ENCODE measurements at regions of chr3 and their contacts with region 1.

Region 1: GRCh38 chr3:61858056-61858455 is 296.7 kb downstream of the PTPRG start:
- DNase-seq: no peak
- H3K4me3 Mint-ChIP-seq: no peak overlapping the region
- H3K27ac Mint-ChIP-seq: no peak overlapping the region
- H3K4me1 Mint-ChIP-seq: no peaks in the 10 kb centered on the region
- H3K27me3 Mint-ChIP-seq: no peaks in the 10 kb centered on the region

Region 2: DNA sequence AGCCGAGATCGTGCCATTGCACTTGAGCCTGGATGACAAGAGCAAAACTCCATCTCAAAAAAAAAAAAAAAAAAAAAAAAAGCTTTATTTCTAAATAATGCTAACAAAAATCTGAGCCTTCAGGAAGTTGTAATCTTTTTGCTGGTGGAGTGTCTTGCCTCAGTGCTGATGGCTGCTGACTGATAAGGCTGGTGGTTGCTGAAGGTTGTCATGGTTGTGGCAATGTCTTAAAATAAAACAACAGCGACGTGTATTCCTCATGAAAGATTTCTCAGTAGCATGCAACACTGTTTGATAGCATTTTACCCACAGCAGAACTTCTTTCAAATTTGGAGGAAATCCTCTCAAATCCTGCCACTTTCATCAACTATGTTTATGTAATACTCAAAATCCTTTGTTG is 374.1 kb before region 1 on chr3:
- CTCF ChIA-PET with region 1: no interaction called
- DNase-seq: no peak
- H3K4me3 Mint-ChIP-seq: no peak overlapping the region
- H3K27ac Mint-ChIP-seq: no peak overlapping the region
- H3K4me1 Mint-ChIP-seq: no peaks in the 10 kb centered on the region
- H3K27me3 Mint-ChIP-seq: no peaks in the 10 kb centered on the region

Region 3: DNA sequence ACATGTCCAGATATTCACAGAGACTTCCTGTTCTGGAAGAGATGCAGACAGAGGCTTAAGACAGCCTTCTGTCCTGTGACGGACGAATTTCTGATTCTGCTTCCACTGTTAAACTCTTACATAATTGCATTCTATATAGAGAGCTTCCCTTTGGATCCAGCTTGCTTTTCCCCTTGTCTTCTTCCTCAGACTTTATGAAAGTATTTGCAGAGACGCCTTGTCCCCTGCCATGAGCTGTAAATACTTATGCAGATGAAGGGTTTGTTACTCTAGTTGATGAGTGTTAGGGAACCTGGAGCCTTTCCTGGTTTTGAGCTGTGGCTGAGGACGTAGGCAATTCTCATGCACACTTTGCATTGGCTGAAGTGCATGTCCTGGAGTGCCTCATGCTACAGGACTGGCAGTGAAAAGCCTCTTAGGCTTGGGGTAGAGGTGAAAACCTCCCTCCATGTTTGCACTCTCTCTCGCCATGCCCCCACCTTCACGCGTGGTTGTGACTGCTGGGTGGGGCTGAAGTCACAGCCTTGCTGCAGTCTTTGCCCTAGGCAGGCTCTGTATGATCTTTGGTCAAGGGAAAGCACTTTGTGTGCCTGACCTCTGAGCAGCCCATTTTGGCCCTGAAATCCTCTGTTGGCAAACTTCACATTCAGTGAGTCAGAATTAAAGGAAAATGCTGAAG is 10.1 kb before region 1 on chr3:
- CTCF ChIA-PET with region 1: no interaction called
- DNase-seq: no peak
- H3K4me3 Mint-ChIP-seq: no peak overlapping the region
- H3K27ac Mint-ChIP-seq: no peak overlapping the region
- H3K4me1 Mint-ChIP-seq: no peaks in the 10 kb centered on the region
- H3K27me3 Mint-ChIP-seq: no peaks in the 10 kb centered on the region

Region 4: DNA sequence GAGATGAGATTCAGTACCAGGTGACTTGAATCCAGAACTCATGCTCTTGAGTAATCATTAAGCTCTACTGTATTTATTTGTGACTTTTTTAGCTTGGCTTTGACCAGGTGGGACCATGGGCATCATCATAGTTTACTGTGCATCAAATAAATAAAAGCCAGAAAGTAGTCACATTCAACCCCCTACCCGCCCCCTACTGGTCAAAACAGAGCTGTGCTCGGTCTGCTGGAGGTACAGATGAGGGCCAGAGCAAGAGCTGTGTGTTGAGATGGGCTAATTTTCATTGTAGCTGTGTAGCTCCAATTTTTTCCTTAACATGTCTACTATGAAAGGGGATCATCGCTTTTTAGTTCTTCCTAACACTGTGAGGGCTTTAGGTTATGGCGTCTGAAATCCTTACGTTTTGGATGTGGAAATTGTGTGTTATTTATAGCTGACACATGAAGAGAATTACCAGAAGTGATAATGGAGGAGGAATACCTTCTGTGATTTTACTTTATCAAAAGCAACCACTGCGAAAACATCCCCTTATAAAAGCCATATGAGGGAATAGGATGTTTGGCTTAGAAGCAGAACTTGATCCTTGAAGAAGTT is 78.4 kb after region 1 on chr3:
- CTCF ChIA-PET with region 1: interaction called, 10 read pairs
- DNase-seq: peak; percentile 33
- H3K4me3 Mint-ChIP-seq: no peak overlapping the region
- H3K27ac Mint-ChIP-seq: no peak overlapping the region
- H3K4me1 Mint-ChIP-seq: no peaks in the 10 kb centered on the region
- H3K27me3 Mint-ChIP-seq: no peaks in the 10 kb centered on the region

Measured in activated naive CD4-positive, alpha-beta T cell treated with anti-CD3 and anti-CD28 coated beads, Interleukin-2, amount 10 ng/mL, durations not matched to agents 7 days and 5 days (primary cell).